ENCODE measurements at regions of chr13 and their contacts with region 1.

Region 1: DNA sequence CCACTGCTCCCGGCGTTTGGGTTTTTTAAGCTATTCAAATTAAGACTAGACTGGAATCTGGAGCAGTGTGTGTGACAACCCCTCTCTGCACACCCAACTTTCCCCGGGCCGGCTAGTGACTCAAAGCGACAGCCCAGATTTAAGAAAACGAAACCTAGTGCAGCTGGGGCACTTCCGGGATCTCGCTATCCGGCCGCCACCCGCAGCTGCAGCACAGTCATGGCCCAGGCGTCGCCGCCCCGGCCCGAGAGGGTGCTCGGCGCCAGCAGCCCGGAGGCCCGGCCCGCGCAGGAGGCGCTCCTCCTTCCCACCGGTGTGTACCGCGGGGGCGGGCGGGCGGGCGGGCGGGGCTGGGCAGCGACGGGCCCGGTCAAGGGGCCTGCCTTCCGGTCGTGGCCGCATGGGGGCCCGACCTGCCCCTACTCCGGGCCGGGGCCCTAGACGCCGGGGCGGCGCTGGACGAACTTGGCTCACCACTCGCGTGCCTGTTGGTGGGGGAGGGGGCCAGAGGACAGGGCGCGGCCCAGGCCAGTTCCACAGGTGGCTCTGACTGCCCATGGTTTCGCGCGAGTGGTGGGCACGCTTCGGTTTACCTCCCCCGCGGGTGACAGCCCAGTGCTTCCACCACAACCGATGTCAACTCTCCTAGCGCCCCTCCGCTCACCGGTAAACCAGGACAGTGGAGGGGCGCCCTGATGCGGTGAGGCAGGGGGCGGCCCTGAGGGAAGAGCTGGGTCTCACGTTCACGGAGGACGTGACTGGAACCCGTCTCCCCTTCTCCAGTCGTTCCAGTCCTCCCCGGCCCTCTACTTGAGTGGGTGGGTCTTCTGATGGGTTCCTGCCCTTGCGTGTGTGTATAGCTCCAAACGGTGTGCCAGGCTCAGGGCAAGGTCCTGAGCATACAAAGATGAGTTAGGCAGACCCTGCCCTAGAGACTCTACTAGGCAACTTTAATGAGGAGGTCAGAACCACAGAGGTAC is at the start of gene PHF11:
- DNase-seq: peak; percentile 79 to 82
- ATAC-seq: peak; percentile 88 to 92 (median 91)
- H3K4me3 ChIP-seq: peak within 1 kb of the TSS; percentile 46 to 84 (median 70)
- H3K27ac ChIP-seq: peak within 1 kb of the TSS; percentile 92 to 98 (median 94)
- H3K4me1 ChIP-seq: peaks cover 0 to 44% (median 9%) of the 10 kb centered on the region in 9 donors
- H3K27me3 ChIP-seq: no peaks in the 10 kb centered on the region
- CTCF ChIP-seq: peak in 5 of 9 donors; percentile 15 to 39 (median 36)
- total RNA-seq, gene PHF11: 16.6 to 43.4 (median 19.6) TPM

Region 2: GRCh38 chr13:49585220-49586157 is 89.4 kb after region 1 on chr13 and contains the start of gene RCBTB1:
- intact Hi-C with region 1: loop called in 4 of 10 experiments (anchors 5 to 10 kb)
- DNase-seq: peak; percentile 42 to 73
- ATAC-seq: peak; percentile 97 to 99 (median 98)
- H3K4me3 ChIP-seq: peak within 1 kb of the TSS; percentile 65 to 99 (median 90)
- H3K27ac ChIP-seq: peak within 1 kb of the TSS in 9 of 10 donors; percentile 75 to 90 (median 83)
- H3K4me1 ChIP-seq: peaks cover 0 to 25% (median 17%) of the 10 kb centered on the region in 9 donors
- H3K27me3 ChIP-seq: no peaks in the 10 kb centered on the region
- CTCF ChIP-seq: no peak
- total RNA-seq, gene RCBTB1: 12.9 to 23.5 (median 18.7) TPM

Region 3: GRCh38 chr13:49606747-49607648 is 110.9 kb after region 1 on chr13:
- intact Hi-C with region 1: loop called in 3 of 10 experiments (anchors 5 to 10 kb)
- DNase-seq: peak; percentile 85 to 88
- ATAC-seq: peak; percentile 93 to 99 (median 97)
- H3K4me3 ChIP-seq: peak overlapping the region in 8 of 10 donors; percentile 18 to 52 (median 42)
- H3K27ac ChIP-seq: peak overlapping the region in 5 of 10 donors; percentile 34 to 53 (median 45)
- H3K4me1 ChIP-seq: peaks cover 0 to 18% (median 0%) of the 10 kb centered on the region in 9 donors
- H3K27me3 ChIP-seq: no peaks in the 10 kb centered on the region
- CTCF ChIP-seq: peak; percentile 68 to 93 (median 84)